ENCODE measurements at regions of chr7 and their contacts with region 1.

Region 1: GRCh38 chr7:101099969-101100781 is 14.9 kb downstream of the TRIM56 start:
- DNase-seq: peak in 1 of 2 donors; percentile 99
- H3K4me3 ChIP-seq: no peak overlapping the region
- H3K27ac ChIP-seq: peak overlapping the region; percentile 87
- H3K4me1 ChIP-seq: peaks cover 21% of the 10 kb centered on the region
- H3K27me3 ChIP-seq: no peaks in the 10 kb centered on the region
- CTCF ChIP-seq: no peak
- POLR2A ChIP-seq: no peak

Region 2: DNA sequence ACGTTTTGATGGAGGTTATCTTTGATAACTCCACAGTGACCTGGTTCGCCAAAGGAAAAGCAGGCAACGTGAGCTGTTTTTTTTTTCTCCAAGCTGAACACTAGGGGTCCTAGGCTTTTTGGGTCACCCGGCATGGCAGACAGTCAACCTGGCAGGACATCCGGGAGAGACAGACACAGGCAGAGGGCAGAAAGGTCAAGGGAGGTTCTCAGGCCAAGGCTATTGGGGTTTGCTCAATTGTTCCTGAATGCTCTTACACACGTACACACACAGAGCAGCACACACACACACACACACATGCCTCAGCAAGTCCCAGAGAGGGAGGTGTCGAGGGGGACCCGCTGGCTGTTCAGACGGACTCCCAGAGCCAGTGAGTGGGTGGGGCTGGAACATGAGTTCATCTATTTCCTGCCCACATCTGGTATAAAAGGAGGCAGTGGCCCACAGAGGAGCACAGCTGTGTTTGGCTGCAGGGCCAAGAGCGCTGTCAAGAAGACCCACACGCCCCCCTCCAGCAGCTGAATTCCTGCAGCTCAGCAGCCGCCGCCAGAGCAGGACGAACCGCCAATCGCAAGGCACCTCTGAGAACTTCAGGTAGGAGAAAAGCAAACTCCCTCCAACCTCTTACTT is 26.6 kb after region 1 on chr7 and contains the start of gene SERPINE1:
- intact Hi-C with region 1: loop called (anchors 2 kb)
- DNase-seq: peak in 1 of 2 donors; percentile 99
- H3K4me3 ChIP-seq: peak within 1 kb of the TSS; percentile 14 to 45
- H3K27ac ChIP-seq: peak within 1 kb of the TSS; percentile 81
- H3K4me1 ChIP-seq: peaks cover 54% of the 10 kb centered on the region
- H3K27me3 ChIP-seq: no peaks in the 10 kb centered on the region
- CTCF ChIP-seq: peak in 1 of 3 experiments; percentile 26
- POLR2A ChIP-seq: peak in 1 of 2 donors; percentile 87
- total RNA-seq, gene SERPINE1: 14.7 TPM

Region 3: GRCh38 chr7:101138213-101138870 is 38.2 kb after region 1 on chr7:
- intact Hi-C with region 1: loop called (anchors 5 kb)
- DNase-seq: peak in 1 of 2 donors; percentile 97
- H3K4me3 ChIP-seq: peak overlapping the region in 1 of 2 donors; percentile 9
- H3K27ac ChIP-seq: peak overlapping the region; percentile 64
- H3K4me1 ChIP-seq: peaks cover 6% of the 10 kb centered on the region
- H3K27me3 ChIP-seq: no peaks in the 10 kb centered on the region
- CTCF ChIP-seq: peak; percentile 57 to 87 (median 70)
- POLR2A ChIP-seq: no peak

Region 4: GRCh38 chr7:101410743-101411507 is 310.8 kb after region 1 on chr7:
- intact Hi-C with region 1: no loop called
- DNase-seq: no peak
- H3K4me3 ChIP-seq: no peak overlapping the region
- H3K27ac ChIP-seq: no peak overlapping the region
- H3K4me1 ChIP-seq: no peaks in the 10 kb centered on the region
- H3K27me3 ChIP-seq: no peaks in the 10 kb centered on the region
- CTCF ChIP-seq: peak in 1 of 3 experiments; percentile 24
- POLR2A ChIP-seq: no peak

Region 5: DNA sequence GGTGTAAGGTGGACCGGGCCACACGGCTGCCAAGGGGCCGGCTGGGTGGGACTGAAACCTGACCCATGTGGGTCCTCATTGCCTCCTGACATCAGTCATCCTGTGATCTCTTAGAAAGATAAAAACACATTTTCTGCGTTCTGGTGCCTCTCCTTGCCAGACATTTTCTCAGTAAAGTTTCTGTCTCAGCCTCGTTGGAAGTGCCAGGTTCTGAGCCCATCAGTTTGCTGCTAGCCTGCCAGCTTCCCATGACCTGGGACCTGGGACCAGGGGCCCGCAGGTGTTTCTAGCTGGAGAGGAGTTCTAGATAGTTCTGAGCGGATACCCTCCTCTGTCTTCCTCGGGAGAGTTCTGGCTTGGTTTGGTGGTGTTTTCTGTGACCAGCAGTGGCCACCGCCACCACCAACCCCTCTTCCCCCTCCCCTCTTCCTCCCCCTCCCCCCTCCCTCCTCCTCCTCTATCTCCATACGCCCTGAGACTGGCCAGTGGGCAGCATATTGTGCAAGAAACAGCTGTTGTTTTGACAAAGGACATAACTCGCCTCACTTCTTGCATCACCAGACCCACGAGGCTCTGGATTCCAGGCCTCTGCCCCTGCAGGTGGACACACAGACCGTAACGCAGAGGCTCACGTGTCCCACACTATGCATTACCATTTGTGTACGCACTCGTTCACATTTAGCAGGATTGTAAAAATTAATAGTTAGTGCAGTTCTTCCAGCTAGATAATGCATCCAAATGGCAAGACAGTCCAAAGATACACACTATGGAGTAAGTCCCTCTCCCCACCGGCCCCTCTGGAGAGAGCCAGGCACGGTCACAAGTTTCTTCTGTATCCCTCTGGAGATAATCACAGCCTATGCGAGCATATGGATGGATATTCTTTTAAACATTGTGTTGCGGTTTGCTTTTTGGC is 811.9 kb after region 1 on chr7:
- intact Hi-C with region 1: no loop called
- DNase-seq: no peak
- H3K4me3 ChIP-seq: no peak overlapping the region
- H3K27ac ChIP-seq: peak overlapping the region; percentile 80
- H3K4me1 ChIP-seq: peaks cover 31% of the 10 kb centered on the region
- H3K27me3 ChIP-seq: no peaks in the 10 kb centered on the region
- CTCF ChIP-seq: no peak
- POLR2A ChIP-seq: no peak

Measured in vagina (tissue), 2 donors.